ENCODE measurements at regions of chr2 and their contacts with region 1.

Region 1: GRCh38 chr2:127479219-127479825 is 47.0 kb downstream of the IWS1 start:
- DNase-seq: peak; percentile 27
- H3K4me3 ChIP-seq: no peak overlapping the region
- H3K27ac ChIP-seq: no peak overlapping the region
- H3K27me3 ChIP-seq: no peaks in the 10 kb centered on the region
- CTCF ChIP-seq: peak; percentile 78

Region 2: DNA sequence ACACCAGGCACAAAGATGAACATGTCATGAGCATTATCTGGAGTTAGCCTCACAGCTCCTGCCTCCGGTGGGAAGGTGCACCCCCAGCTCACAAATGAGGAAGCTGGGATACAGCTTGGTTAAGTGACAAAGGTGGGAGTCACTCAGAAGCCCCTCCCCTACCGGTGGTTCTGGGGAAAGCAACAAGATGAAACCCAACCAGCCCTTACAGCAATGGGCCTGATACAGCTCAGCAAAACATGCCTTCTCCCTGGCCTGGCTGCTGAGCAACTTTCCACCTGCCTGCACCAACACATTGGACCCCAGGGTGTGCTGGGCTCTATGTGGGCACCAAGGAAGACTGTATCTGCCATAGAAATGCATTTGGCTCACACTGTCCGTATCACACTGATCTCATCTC is 710.2 kb before region 1 on chr2:
- CTCF ChIA-PET with region 1: no interaction called
- POLR2A ChIA-PET with region 1: no interaction called
- DNase-seq: no peak
- H3K4me3 ChIP-seq: no peak overlapping the region
- H3K27ac ChIP-seq: no peak overlapping the region
- H3K27me3 ChIP-seq: no peaks in the 10 kb centered on the region
- CTCF ChIP-seq: 0 out of 2 replicates have a peak, but pooled peaks have one; percentile 5

Region 3: DNA sequence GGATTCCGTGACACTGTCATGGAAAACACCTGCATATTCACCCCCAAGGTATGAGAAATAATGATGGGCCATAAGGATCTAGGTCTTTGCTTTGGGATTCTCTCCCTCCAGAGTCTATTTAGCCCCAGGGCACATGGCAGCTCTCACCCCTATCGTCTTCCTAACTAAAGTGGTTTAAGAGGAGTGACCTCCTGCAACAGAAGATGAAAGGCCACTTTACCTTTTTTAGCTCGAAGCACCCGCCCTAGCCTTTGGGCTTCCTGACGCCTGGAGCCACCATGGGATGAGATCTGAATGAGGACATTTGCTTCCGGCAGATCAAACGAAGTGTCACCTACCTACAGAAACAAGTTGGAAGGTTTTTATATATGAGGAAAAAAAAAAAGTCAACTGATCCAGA is 208.2 kb before region 1 on chr2:
- CTCF ChIA-PET with region 1: no interaction called
- POLR2A ChIA-PET with region 1: no interaction called
- DNase-seq: no peak
- H3K4me3 ChIP-seq: no peak overlapping the region
- H3K27ac ChIP-seq: no peak overlapping the region
- H3K27me3 ChIP-seq: no peaks in the 10 kb centered on the region
- CTCF ChIP-seq: no peak

Region 4: GRCh38 chr2:127293748-127294562 is 185.4 kb before region 1 on chr2 and contains the start of gene ERCC3:
- CTCF ChIA-PET with region 1: interaction called, 12 read pairs
- POLR2A ChIA-PET with region 1: no interaction called
- DNase-seq: peak; percentile 38
- H3K4me3 ChIP-seq: peak within 1 kb of the TSS; percentile 98
- H3K27ac ChIP-seq: peak within 1 kb of the TSS; percentile 40
- H3K27me3 ChIP-seq: no peaks in the 10 kb centered on the region
- CTCF ChIP-seq: no peak
- polyA plus RNA-seq, gene ERCC3: 51.7 and 53.5 TPM in 2 replicates

Region 5: GRCh38 chr2:127324635-127325034 is 154.7 kb before region 1 on chr2:
- CTCF ChIA-PET with region 1: interaction called, 231 read pairs
- POLR2A ChIA-PET with region 1: interaction called, 3 read pairs
- DNase-seq: peak; percentile 34
- H3K4me3 ChIP-seq: no peak overlapping the region
- H3K27ac ChIP-seq: no peak overlapping the region
- H3K27me3 ChIP-seq: no peaks in the 10 kb centered on the region
- CTCF ChIP-seq: peak; percentile 72

Region 6: GRCh38 chr2:127365211-127365643 is 114.1 kb before region 1 on chr2:
- CTCF ChIA-PET with region 1: interaction called, 11 read pairs
- POLR2A ChIA-PET with region 1: no interaction called
- DNase-seq: no peak
- H3K4me3 ChIP-seq: no peak overlapping the region
- H3K27ac ChIP-seq: no peak overlapping the region
- H3K27me3 ChIP-seq: no peaks in the 10 kb centered on the region
- CTCF ChIP-seq: no peak

Region 7: DNA sequence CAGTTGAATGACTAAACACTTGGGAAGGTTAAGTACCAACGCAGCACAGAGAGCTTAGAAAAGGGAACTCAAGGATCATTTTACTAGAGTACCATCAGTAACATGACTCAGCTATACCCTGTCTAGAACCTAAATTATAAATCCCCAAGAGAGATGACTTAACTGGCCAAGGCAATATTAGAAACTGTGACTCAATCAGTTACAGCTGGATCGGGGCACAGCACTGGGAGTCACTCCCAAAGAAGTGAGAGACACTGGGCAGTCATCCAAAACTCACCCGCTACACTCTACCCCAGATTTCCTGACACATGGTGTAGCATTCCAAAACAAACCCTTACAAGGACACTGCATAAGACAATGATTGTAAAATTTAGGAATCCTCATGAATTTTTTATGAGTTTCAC is 29.3 kb after region 1 on chr2:
- CTCF ChIA-PET with region 1: interaction called, 17 read pairs
- POLR2A ChIA-PET with region 1: no interaction called
- DNase-seq: peak; percentile 88
- H3K4me3 ChIP-seq: no peak overlapping the region
- H3K27ac ChIP-seq: peak overlapping the region; percentile 80
- H3K27me3 ChIP-seq: no peaks in the 10 kb centered on the region
- CTCF ChIP-seq: no peak

Measured in AG04450 (cell line).